ENCODE measurements at regions of chr20 and their contacts with region 1.

Region 1: GRCh38 chr20:51767010-51767558 is 1.1 kb downstream of the ATP9A start:
- DNase-seq: peak; percentile 100
- H3K4me3 Mint-ChIP-seq: peak overlapping the region; percentile 73
- H3K27ac Mint-ChIP-seq: peak overlapping the region; percentile 81
- H3K4me1 Mint-ChIP-seq: peaks cover 35% of the 10 kb centered on the region
- H3K27me3 Mint-ChIP-seq: no peaks in the 10 kb centered on the region
- CTCF ChIP-seq: no peak

Region 2: DNA sequence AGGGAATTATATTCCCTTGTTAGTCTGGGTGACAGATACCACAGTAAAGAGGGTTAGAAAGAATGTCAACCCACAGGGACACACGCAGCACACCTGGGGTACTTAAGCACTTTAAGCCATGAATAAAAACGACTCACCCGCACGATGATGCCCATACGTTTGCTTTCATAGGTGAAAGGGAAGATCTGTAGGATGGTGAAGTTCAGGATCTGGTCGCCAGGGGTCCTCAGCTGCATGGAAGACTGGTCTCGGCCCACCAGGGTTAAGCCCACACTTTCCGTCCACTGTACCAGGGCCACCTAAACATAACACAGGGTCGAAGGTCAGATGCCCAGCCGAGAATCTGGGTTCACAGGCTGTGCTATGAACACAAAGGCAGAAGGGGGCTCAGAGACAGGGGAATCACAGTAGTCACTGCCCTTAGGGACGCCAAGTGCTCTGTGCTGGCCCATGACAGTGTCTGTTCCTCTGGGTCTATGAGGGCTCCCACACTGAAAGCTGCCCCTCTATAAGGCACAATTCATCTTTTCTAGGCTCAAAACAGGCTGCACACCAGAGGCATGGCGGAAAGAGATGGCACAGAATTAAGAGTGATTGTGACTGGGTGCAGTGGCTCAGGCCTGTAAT is 127.8 kb before region 1 on chr20:
- CTCF ChIA-PET with region 1: no interaction called
- intact Hi-C with region 1: loop called (anchors 10 kb)
- DNase-seq: peak; percentile 86
- H3K4me3 Mint-ChIP-seq: no peak overlapping the region
- H3K27ac Mint-ChIP-seq: no peak overlapping the region
- H3K4me1 Mint-ChIP-seq: peaks cover 9% of the 10 kb centered on the region
- H3K27me3 Mint-ChIP-seq: no peaks in the 10 kb centered on the region
- CTCF ChIP-seq: peak; percentile 98

Region 3: DNA sequence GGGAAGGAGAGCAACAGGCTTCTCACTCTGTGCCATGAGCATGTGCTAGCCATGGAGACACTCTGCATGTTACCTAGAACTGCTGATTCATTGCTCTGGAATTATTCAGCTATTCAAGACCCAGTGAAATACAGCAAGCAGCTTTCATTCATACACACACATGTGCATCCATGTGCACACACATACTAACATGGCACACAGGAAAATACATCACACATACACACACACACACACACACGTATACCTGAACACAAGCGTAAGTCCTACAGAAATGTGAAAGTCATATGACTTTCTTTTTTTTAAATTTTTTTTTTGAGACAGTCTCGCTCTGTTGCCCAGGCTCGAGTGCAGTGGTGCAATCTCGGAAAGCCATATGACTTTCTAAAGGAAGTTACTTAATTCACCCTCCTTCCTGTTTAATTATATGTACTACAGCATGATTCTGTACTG is 116.4 kb before region 1 on chr20:
- CTCF ChIA-PET with region 1: no interaction called
- intact Hi-C with region 1: no loop called
- DNase-seq: no peak
- H3K4me3 Mint-ChIP-seq: no peak overlapping the region
- H3K27ac Mint-ChIP-seq: no peak overlapping the region
- H3K4me1 Mint-ChIP-seq: no peaks in the 10 kb centered on the region
- H3K27me3 Mint-ChIP-seq: no peaks in the 10 kb centered on the region
- CTCF ChIP-seq: no peak

Region 4: DNA sequence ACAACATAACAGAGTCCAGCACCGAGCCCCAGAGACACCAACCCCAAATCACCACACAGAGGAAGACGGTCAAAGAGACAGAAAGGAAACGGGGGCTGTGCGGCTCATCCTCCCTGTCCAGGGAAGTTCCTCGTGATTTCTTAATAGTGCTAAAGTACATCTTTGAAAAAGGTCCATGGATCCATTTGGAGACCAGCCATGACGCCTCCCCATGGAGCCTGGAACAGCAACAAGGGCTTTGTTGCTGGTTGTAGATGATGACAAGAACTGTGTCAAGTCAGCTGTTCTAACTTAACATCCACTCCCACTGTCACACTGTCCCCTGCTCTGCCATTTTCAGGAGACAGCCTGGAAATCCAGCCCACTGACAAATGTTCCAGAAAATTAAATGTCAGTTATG is 98.6 kb before region 1 on chr20:
- CTCF ChIA-PET with region 1: no interaction called
- intact Hi-C with region 1: no loop called
- DNase-seq: no peak
- H3K4me3 Mint-ChIP-seq: no peak overlapping the region
- H3K27ac Mint-ChIP-seq: no peak overlapping the region
- H3K4me1 Mint-ChIP-seq: no peaks in the 10 kb centered on the region
- H3K27me3 Mint-ChIP-seq: no peaks in the 10 kb centered on the region
- CTCF ChIP-seq: no peak

Region 5: GRCh38 chr20:51695574-51696303 is 71.3 kb before region 1 on chr20:
- CTCF ChIA-PET with region 1: interaction called, 15 read pairs
- intact Hi-C with region 1: no loop called
- DNase-seq: peak; percentile 69
- H3K4me3 Mint-ChIP-seq: peak overlapping the region; percentile 5
- H3K27ac Mint-ChIP-seq: peak overlapping the region; percentile 81
- H3K4me1 Mint-ChIP-seq: peaks cover 47% of the 10 kb centered on the region
- H3K27me3 Mint-ChIP-seq: no peaks in the 10 kb centered on the region
- CTCF ChIP-seq: no peak

Region 6: DNA sequence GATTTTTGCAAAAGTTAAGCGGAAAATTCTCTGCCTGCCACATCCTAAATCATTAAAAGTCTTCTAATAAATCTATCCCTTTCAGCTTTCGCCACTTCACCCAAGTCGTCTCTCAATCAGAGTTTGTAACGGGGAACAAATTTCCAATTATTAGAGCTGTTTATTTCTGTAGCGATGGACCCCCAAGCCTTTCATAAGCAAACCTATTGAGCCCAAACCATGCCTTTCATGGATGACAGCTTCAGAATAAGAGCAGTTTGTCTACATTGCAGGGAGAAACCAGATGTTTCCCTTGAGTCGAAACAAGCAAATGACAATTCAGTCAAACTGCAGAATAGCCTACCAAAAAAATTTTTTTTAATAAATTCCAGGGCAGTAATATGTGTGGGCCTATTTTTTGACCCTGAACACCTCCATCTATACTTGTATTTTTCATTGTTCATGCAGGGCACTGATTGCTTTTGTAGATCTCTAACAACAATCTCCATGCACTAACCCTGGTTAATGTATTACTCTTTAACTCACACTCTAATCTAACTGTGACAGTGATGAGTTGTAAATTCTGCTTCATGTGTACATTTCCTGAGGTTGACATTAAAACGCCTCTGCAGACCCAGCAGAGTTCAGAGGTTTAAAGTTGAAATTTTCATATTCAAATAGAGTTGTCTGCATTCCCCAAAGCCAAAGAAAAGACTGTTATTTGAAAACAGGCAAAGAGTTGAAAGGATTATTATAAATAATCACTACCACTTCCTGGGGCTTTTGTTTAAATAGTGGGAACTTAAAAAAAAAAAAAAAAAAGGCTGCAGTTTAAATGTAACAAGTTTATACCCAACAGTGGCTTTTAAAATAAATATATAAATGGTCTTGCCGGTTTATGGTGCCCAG is 63.4 kb before region 1 on chr20:
- CTCF ChIA-PET with region 1: interaction called, 15 read pairs
- intact Hi-C with region 1: loop called (anchors 2 kb)
- DNase-seq: no peak
- H3K4me3 Mint-ChIP-seq: peak overlapping the region; percentile 37
- H3K27ac Mint-ChIP-seq: peak overlapping the region; percentile 67
- H3K4me1 Mint-ChIP-seq: peaks cover 65% of the 10 kb centered on the region
- H3K27me3 Mint-ChIP-seq: no peaks in the 10 kb centered on the region
- CTCF ChIP-seq: no peak

Region 7: DNA sequence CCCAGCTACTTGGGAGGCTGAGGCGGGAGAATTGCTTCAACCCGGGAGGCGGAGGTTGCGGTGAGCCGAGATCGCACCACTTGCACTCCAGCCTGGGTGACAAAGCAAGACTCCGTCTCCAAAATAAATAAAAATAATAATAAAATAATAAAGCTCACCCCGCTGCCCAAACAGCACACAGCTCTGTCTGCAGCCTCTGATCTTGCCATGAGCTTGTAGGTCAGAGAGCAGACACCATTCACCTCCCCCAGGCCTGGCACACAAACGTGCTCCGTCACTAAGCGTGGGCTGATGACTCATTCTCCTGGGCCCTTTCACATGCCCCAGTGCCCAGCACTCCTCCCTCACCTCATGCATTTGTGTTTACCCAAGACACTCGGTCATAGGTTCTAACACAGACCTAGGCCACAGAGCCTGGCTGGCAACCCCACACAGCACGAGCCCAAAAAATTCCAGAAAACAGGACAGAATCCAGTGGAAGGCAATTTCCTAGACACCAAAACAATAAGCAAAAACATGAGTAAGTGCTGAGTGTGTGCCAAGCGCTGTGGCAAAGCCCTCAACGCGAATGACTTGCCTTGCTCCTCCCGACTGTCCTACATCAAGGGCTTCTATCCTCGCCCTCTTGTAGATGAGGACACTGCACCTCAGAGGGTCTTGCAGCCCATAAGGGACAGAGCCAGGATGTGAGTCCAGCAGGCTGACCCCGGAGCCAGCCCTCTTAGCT is 16.9 kb before region 1 on chr20:
- CTCF ChIA-PET with region 1: interaction called, 23 read pairs
- intact Hi-C with region 1: no loop called
- DNase-seq: peak; percentile 97
- H3K4me3 Mint-ChIP-seq: peak overlapping the region; percentile 54
- H3K27ac Mint-ChIP-seq: peak overlapping the region; percentile 94
- H3K4me1 Mint-ChIP-seq: peaks cover 64% of the 10 kb centered on the region
- H3K27me3 Mint-ChIP-seq: no peaks in the 10 kb centered on the region
- CTCF ChIP-seq: no peak

Region 8: DNA sequence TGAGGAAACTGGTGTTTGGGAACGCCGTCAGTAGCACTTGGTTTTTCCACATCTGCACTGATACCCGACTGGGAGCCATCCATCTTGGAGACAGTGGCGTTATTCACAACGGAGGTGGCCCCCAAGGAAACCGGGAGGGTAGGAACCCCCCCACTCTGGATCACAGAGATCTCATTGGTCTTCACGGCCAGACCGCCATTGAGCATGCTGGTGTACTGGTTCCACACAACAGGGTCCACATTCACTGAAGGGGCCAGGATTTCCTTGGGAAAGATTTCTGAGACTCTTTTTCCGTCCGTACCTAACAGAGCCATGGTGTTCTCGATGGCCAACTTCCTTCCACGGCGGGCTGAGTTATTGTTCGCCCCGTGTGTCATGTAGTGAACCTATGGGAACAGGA is 17.2 kb after region 1 on chr20:
- CTCF ChIA-PET with region 1: no interaction called
- intact Hi-C with region 1: no loop called
- DNase-seq: no peak
- H3K4me3 Mint-ChIP-seq: no peak overlapping the region
- H3K27ac Mint-ChIP-seq: no peak overlapping the region
- H3K4me1 Mint-ChIP-seq: no peaks in the 10 kb centered on the region
- H3K27me3 Mint-ChIP-seq: no peaks in the 10 kb centered on the region
- CTCF ChIP-seq: no peak

Region 9: DNA sequence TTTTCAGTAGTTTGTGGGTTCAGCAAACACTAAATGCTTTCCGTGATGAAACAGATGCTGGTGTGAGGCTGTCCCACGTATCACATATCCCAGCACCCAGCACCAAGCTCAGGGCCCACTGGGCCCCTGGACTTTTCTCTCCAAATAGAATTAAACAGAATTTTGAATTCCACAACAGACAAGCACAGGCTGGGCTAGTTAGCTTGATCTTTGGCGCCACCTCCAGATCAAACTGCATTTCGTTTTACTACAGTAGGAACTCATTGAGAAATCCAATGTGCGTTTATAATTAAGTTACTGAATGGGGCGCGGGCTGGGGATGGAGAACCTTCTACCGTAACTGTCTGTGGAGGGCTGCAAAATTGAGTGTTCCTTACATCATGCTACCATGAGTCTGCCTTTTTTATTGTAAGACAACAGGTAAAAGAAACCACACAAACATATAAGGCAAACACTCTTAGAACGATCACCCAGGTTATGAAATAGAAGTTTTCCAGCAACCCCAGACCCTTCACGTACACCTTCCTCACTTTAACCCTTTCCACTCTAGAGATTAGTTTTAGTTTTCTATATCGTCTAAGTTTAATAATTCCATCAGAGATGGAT is 316.6 kb after region 1 on chr20:
- CTCF ChIA-PET with region 1: interaction called, 4 read pairs
- intact Hi-C with region 1: loop called (anchors 10 kb)
- DNase-seq: peak; percentile 80
- H3K4me3 Mint-ChIP-seq: no peak overlapping the region
- H3K27ac Mint-ChIP-seq: no peak overlapping the region
- H3K4me1 Mint-ChIP-seq: no peaks in the 10 kb centered on the region
- H3K27me3 Mint-ChIP-seq: no peaks in the 10 kb centered on the region
- CTCF ChIP-seq: peak; percentile 88